HepG2 (cell line): ENCODE measurements at regions of chr17 and their contacts with region 1.

Region 1: DNA sequence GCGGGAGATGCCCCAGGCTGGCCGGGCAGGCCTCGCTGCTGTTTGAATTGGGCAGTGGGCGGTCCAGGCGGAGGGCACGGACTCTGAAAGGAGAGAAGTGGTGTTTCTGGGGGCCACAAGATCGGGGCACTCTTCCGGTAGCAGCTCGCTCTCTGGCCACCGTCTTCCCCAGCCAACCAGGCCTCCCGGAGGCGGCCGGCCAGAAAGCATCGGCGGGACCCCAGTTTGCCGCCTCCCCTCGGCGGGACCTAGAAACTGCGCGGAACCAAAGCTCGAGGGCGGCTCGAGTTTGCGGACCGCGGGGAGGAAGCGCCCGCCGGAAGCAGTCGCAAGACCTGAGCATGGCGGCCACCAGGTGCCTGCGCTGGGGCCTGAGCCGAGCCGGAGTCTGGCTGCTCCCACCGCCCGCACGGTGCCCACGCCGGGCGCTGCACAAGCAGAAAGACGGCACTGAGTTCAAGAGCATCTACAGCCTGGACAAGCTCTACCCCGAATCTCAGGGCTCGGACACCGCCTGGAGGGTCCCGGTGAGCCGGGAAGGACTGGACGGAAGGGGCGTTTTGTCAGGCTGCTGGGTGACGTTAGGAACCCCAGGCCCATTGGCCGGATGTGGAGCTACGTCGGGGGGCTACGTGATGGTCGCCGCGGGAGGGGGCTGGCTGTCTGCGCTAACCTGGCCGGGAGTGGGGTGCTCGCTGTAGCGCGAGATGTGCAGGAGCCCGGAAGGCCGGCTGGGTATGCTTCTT is at the start of gene MRPL58:
- DNase-seq: peak; percentile 88
- ATAC-seq: peak; percentile 91
- H3K4me3 ChIP-seq: peak within 1 kb of the TSS; percentile 71 to 96 (median 85)
- H3K27ac ChIP-seq: peak within 1 kb of the TSS; percentile 85
- H3K4me1 ChIP-seq: peaks cover 28% of the 10 kb centered on the region
- H3K27me3 ChIP-seq: no peaks in the 10 kb centered on the region; a peak in 2 of 5 replicates
- CTCF ChIP-seq: peak; percentile 74
- EP300 ChIP-seq: peak; percentile 48 to 72; a peak in 3 of 4 replicates
- POLR2A ChIP-seq: peak; percentile 81 to 89; a peak in 3 of 4 replicates
- RAD21 ChIP-seq: peak; percentile 80
- total RNA-seq, gene MRPL58: 68.9 and 101 TPM in 2 replicates

Region 2: DNA sequence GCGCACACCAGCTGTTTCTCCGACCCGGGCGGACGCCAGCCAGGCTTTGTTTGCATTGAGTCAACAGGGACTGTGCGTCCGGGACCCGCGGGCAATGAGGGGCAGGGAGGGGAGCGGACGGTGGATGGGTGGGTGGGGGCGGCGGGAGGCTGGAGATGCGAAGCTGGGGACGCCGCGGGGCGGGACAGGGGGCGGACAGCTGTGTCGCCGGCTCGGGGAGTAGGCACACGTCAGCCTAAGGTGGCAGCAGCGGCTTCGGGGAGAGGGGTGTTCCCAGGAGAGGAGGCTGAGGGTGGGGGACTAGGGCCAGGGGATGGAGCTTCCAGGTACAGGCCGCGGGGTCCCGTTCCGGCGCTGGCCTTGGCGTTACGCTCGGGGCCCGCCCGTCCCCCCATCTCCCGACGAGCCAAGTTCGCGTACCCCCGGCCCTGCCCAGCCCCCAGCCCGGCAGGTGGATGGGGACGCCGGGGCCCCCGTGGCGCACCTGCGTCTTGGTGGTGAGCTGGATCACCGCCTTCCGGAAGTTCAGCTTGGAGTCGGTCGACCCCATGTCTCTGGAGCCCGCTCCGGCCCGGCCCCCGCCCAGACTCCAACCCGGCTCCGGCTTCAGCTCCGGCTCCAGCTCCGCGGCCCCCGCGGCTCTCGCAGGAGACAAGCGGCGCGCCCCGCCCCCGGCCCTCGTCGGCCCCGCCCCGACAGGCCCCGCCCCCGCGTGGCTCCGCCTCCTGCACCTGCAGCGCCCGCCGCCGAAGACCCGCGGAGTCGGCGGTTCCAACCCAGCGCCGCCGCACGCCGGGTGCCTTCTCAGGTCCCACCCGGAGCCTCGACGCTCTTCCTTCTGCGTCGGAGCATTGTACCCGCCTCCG is 40.2 kb before region 1 on chr17 and contains the start of gene HID1:
- CTCF ChIA-PET with region 1: no interaction called
- POLR2A ChIA-PET with region 1: interaction called, 65 read pairs
- in situ Hi-C with region 1: no loop called
- intact Hi-C with region 1: no loop called
- DNase-seq: peak; percentile 73
- ATAC-seq: peak; percentile 90
- H3K4me3 ChIP-seq: peak within 1 kb of the TSS; percentile 67 to 83 (median 70)
- H3K27ac ChIP-seq: no peak within 1 kb of the TSS
- H3K4me1 ChIP-seq: peaks cover 54% of the 10 kb centered on the region
- H3K27me3 ChIP-seq: peaks cover 5 to 50% of the 10 kb centered on the region in 2 experiments; a peak in 4 of 5 replicates
- CTCF ChIP-seq: 0 out of 2 replicates have a peak, but pooled peaks have one; percentile 17
- EP300 ChIP-seq: no peak
- POLR2A ChIP-seq: no peak
- RAD21 ChIP-seq: peak; percentile 15; the same call in 1 of the 2 replicates
- total RNA-seq, gene HID1: 1.7 and 2.1 TPM in 2 replicates

Region 3: DNA sequence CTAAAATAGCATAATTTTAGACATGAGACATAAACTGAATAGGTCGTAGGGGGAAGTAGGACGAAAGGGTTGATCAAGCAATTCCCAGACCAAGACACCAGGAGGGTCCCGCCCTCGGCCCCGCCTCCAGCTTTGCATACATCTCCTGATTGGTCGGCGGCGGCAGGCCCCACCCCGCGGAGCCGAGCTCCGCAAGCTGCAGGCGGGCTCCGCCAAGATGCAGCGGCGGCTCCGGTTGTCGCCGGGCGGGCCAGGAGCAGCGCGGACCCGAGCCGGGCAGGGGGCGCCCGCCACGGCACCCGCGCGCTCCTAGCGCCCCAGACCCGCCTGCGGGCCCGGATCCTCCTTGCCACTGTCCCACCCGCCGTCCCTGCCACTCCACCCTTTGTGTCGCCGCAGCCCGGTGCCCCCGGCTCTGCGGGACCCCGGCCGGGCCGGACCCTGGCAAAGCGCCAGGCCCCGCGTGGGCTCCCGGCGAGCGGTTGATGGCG is 25.1 kb before region 1 on chr17 and contains the start of gene CDR2L:
- CTCF ChIA-PET with region 1: no interaction called
- POLR2A ChIA-PET with region 1: interaction called, 50 read pairs
- in situ Hi-C with region 1: no loop called
- intact Hi-C with region 1: no loop called
- DNase-seq: peak; percentile 86
- ATAC-seq: peak; percentile 91
- H3K4me3 ChIP-seq: peak within 1 kb of the TSS; percentile 63 to 82 (median 80)
- H3K27ac ChIP-seq: no peak within 1 kb of the TSS
- H3K4me1 ChIP-seq: peaks cover 54% of the 10 kb centered on the region
- H3K27me3 ChIP-seq: peaks cover 0 to 9% of the 10 kb centered on the region in 2 experiments; a peak in 2 of 5 replicates
- CTCF ChIP-seq: peak; percentile 37; the same call in 1 of the 2 replicates
- EP300 ChIP-seq: no peak
- POLR2A ChIP-seq: peak in 1 of 2 experiments; percentile 65; a peak in 2 of 4 replicates
- RAD21 ChIP-seq: peak; percentile 43
- total RNA-seq, gene CDR2L: 1.9 and 2.1 TPM in 2 replicates

Region 4: DNA sequence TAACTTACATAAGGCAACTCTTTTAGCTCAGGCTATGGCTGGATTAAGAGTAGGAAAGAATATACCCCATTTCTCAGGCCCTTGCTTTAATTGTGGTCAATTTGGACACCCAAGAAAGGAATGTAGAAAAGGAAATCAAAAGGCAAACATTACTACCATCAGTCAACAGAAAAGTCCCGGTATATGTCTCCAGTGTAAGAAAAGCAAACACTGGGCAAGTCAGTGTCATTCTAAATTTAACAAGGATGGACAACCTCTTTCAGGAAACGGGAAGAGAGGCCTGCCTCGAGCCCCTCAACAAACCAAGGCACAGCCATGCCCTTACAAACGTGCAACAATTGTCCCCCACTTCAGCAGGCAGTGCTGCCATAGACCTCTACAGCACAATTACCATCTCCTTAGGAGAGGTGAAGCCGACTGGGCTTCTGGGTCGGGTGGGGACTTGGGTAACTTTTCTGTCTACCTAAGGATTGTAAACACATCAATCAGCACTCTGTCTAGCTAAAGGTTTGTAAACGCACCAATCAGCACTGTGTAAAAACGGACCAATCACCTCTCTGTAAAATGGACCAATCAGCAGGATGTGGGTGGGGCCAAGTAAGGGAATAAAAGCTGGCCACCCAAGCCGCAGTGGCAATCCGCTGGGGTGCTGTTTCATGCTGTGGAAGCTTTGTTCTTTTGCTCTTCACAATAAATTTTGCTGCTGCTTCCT is 12.3 kb after region 1 on chr17:
- CTCF ChIA-PET with region 1: no interaction called
- POLR2A ChIA-PET with region 1: interaction called, 90 read pairs
- in situ Hi-C with region 1: no loop called
- intact Hi-C with region 1: no loop called
- DNase-seq: peak; percentile 61
- ATAC-seq: peak; percentile 75
- H3K4me3 ChIP-seq: peak overlapping the region in 1 of 3 experiments; percentile 46; a peak in 3 of 6 replicates
- H3K27ac ChIP-seq: peak overlapping the region; percentile 43
- H3K4me1 ChIP-seq: peaks cover 25% of the 10 kb centered on the region
- H3K27me3 ChIP-seq: peaks cover 0 to 3% of the 10 kb centered on the region in 2 experiments; a peak in 1 of 5 replicates
- CTCF ChIP-seq: no peak
- EP300 ChIP-seq: no peak
- POLR2A ChIP-seq: peak; percentile 56 to 60; a peak in 2 of 4 replicates
- RAD21 ChIP-seq: no peak

Region 5: DNA sequence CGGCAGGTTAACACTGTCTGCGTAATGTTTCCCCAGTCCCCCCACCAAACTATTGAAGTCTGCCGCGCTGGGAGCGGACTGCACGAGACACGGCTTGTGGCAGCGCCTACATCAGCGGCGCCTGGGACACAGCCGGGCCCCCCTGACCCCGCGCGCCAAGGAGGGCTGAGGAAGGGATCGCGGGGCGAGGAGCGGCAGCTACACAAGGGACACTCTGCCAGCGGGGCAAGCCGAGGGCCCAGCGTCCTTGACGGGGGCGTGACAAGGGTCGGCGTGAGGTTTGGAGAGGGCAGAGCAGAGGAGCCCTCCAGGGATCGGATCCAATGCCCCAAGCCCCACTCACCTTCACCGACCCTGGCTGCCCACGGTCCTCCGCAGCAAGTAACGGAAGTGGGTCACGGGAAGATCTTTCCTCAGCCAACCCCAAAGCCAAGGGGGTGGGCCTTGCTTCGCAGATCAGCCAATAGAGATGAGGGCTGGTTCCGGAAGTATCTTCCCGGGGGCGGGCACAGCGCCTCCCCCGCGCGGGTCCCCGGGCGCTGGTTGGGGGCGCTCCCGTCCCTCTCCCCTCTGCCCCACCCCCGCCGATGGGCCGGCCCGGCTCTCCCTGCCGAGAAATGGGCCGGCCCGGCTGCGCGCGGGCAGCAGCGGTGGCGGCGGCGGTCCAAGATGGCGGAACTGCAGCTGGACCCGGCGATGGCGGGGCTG is 34.2 kb after region 1 on chr17 and contains the starts of genes ATP5PD and KCTD2:
- CTCF ChIA-PET with region 1: no interaction called
- POLR2A ChIA-PET with region 1: interaction called, 10 read pairs
- in situ Hi-C with region 1: no loop called
- intact Hi-C with region 1: no loop called
- DNase-seq: peak; percentile 97
- ATAC-seq: peak; percentile 98
- H3K4me3 ChIP-seq: peak within 1 kb of the TSS; percentile 75 to 98 (median 90)
- H3K27ac ChIP-seq: peak within 1 kb of the TSS; percentile 92
- H3K4me1 ChIP-seq: peaks cover 29% of the 10 kb centered on the region
- H3K27me3 ChIP-seq: no peaks in the 10 kb centered on the region; a peak in 1 of 5 replicates
- CTCF ChIP-seq: peak; percentile 40
- EP300 ChIP-seq: peak in 1 of 2 experiments; percentile 56; a peak in 1 of 4 replicates
- POLR2A ChIP-seq: peak; percentile 98 to 99
- RAD21 ChIP-seq: peak; percentile 18
- total RNA-seq, gene ATP5PD: 428 and 565 TPM in 2 replicates
- total RNA-seq, gene KCTD2: 27.5 and 28.3 TPM in 2 replicates

Region 6: GRCh38 chr17:75524953-75525719 is 512.6 kb after region 1 on chr17 and contains the start of gene LLGL2:
- CTCF ChIA-PET with region 1: no interaction called
- POLR2A ChIA-PET with region 1: no interaction called
- in situ Hi-C with region 1: no loop called
- intact Hi-C with region 1: no loop called
- DNase-seq: peak; percentile 83
- ATAC-seq: peak; percentile 81
- H3K4me3 ChIP-seq: peak within 1 kb of the TSS; percentile 85 to 95 (median 86)
- H3K27ac ChIP-seq: peak within 1 kb of the TSS; percentile 72
- H3K4me1 ChIP-seq: peaks cover 21% of the 10 kb centered on the region
- H3K27me3 ChIP-seq: no peaks in the 10 kb centered on the region
- CTCF ChIP-seq: peak; percentile 88
- EP300 ChIP-seq: peak in 1 of 2 experiments; percentile 32; a peak in 2 of 4 replicates
- POLR2A ChIP-seq: peak in 1 of 2 experiments; percentile 64; a peak in 2 of 4 replicates
- RAD21 ChIP-seq: peak; percentile 87
- total RNA-seq, gene LLGL2: 53.9 and 86.7 TPM in 2 replicates